Caco-2 (cell line): ENCODE measurements at regions of chr2 and their contacts with region 1.

Region 1: GRCh38 chr2:36486546-36487044 is 111.4 kb downstream of the FEZ2 start:
- DNase-seq: no peak
- H3K4me3 ChIP-seq: no peak overlapping the region
- H3K4me3 Mint-ChIP-seq: peak overlapping the region; percentile 33
- H3K27ac Mint-ChIP-seq: peak overlapping the region; percentile 91
- H3K4me1 ChIP-seq: peaks cover 100% of the 10 kb centered on the region
- H3K4me1 Mint-ChIP-seq: peaks cover 79% of the 10 kb centered on the region
- H3K27me3 ChIP-seq: no peaks in the 10 kb centered on the region
- H3K27me3 Mint-ChIP-seq: no peaks in the 10 kb centered on the region
- CTCF ChIP-seq: no peak

Region 2: DNA sequence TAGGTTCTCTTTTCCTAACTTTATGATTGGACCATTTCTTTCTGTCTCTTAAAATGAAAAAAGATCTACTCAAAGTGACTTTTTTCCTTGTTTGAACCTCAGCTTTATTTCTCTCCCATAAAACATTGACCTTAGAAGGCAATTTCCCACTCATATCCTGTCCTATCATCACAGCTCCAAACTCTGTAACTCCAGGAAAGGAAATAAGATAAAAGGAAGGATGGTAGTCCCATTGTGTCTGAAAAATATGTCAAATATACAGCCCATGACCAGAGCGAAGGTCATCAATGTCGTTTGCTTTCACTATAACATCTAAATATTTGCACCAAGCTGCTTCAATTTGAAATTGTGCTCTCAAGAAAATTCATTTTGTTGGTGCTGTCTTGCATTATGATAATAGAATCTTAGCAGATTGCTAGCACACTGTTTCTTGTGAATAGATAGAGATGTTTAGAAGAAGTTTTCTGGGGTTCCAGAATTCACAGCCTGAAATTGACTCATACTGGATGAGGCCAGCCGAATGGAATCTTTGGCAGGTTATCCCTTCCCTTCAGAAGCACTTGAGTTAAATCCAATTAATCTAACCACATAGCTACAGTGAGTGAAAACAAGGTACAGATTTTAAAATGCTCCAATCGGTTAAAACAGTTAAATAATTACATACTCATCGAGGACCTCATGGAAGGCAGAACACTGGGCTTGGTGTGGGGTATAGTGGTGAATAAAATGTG is 36.0 kb before region 1 on chr2:
- CTCF ChIA-PET with region 1: no interaction called
- POLR2A ChIA-PET with region 1: no interaction called
- intact Hi-C with region 1: loop called (anchors 1 kb)
- DNase-seq: no peak
- H3K4me3 ChIP-seq: no peak overlapping the region
- H3K4me3 Mint-ChIP-seq: peak overlapping the region; percentile 3
- H3K27ac Mint-ChIP-seq: no peak overlapping the region
- H3K4me1 ChIP-seq: peaks cover 92% of the 10 kb centered on the region
- H3K4me1 Mint-ChIP-seq: peaks cover 43% of the 10 kb centered on the region
- H3K27me3 ChIP-seq: no peaks in the 10 kb centered on the region
- H3K27me3 Mint-ChIP-seq: no peaks in the 10 kb centered on the region
- CTCF ChIP-seq: no peak

Region 3: DNA sequence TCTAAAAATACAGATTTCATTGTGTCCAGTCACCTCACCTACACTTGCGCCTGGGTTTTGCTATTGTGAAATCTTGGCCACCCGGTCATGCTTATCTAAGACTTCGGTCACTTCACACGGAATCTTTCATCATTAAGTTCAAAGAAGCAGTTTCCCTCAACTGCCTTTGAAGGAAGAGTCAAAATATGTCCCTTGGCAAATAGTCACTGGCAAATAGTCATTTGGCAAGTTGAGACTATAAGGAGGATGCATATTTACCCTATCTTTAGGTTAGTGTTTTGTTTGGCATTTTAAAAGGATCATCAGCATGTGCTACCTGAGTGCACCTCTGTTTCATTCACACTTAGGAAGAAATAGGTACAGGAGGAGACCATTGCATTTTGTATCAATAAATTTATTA is 15.5 kb after region 1 on chr2:
- CTCF ChIA-PET with region 1: interaction called, 3 read pairs
- POLR2A ChIA-PET with region 1: interaction called, 5 read pairs
- intact Hi-C with region 1: loop called (anchors 1 kb)
- DNase-seq: peak; percentile 83 to 87
- H3K4me3 ChIP-seq: no peak overlapping the region
- H3K4me3 Mint-ChIP-seq: peak overlapping the region; percentile 58
- H3K27ac Mint-ChIP-seq: peak overlapping the region; percentile 83
- H3K4me1 ChIP-seq: peaks cover 87% of the 10 kb centered on the region
- H3K4me1 Mint-ChIP-seq: peaks cover 67% of the 10 kb centered on the region
- H3K27me3 ChIP-seq: no peaks in the 10 kb centered on the region
- H3K27me3 Mint-ChIP-seq: no peaks in the 10 kb centered on the region
- CTCF ChIP-seq: no peak

Region 4: GRCh38 chr2:36658277-36658779 is 171.7 kb after region 1 on chr2:
- CTCF ChIA-PET with region 1: no interaction called
- POLR2A ChIA-PET with region 1: interaction called, 4 read pairs
- intact Hi-C with region 1: loop called (anchors 1 kb)
- DNase-seq: peak; percentile 84 to 91
- H3K4me3 ChIP-seq: no peak overlapping the region
- H3K4me3 Mint-ChIP-seq: peak overlapping the region; percentile 4
- H3K27ac Mint-ChIP-seq: peak overlapping the region; percentile 65
- H3K4me1 ChIP-seq: peaks cover 52% of the 10 kb centered on the region
- H3K4me1 Mint-ChIP-seq: peaks cover 26% of the 10 kb centered on the region
- H3K27me3 ChIP-seq: no peaks in the 10 kb centered on the region
- H3K27me3 Mint-ChIP-seq: no peaks in the 10 kb centered on the region
- CTCF ChIP-seq: no peak

Region 5: GRCh38 chr2:36701391-36701795 is 214.8 kb after region 1 on chr2:
- CTCF ChIA-PET with region 1: no interaction called
- POLR2A ChIA-PET with region 1: no interaction called
- intact Hi-C with region 1: loop called (anchors 1 kb)
- DNase-seq: peak; percentile 77 to 86
- H3K4me3 ChIP-seq: no peak overlapping the region
- H3K4me3 Mint-ChIP-seq: peak overlapping the region; percentile 42
- H3K27ac Mint-ChIP-seq: peak overlapping the region; percentile 42
- H3K4me1 ChIP-seq: peaks cover 42% of the 10 kb centered on the region
- H3K4me1 Mint-ChIP-seq: peaks cover 21% of the 10 kb centered on the region
- H3K27me3 ChIP-seq: no peaks in the 10 kb centered on the region
- H3K27me3 Mint-ChIP-seq: no peaks in the 10 kb centered on the region
- CTCF ChIP-seq: peak; percentile 35 to 50